Heart left ventricle (tissue), 16 donors: ENCODE measurements at regions of chr4 and their contacts with region 1.

Region 1: DNA sequence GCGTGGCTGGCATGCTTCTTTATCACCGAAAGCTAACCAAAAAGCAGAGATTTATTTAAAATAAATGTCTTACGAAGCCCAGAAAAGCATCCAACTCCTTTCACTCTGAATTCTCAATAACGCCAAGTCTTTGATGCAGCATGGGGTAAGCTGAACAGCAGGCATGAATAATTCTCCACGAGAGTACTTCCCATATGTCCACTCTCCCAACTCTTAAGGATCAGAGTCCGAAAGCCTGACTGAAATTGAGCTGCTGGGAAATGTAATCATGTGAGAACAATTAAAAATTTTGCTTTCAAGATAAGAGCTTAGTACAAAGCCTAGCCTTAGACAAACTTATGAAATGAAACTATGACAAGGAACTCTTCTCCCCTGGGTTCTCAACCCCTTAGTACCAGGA is 7.5 kb upstream of the SLC39A8 start:
- DNase-seq: no peak
- ATAC-seq: no peak
- H3K4me3 ChIP-seq: no peak overlapping the region
- H3K27ac ChIP-seq: no peak overlapping the region
- H3K4me1 ChIP-seq: no peaks in the 10 kb centered on the region
- H3K27me3 ChIP-seq: no peaks in the 10 kb centered on the region
- CTCF ChIP-seq: no peak
- POLR2A ChIP-seq: no peak

Region 2: DNA sequence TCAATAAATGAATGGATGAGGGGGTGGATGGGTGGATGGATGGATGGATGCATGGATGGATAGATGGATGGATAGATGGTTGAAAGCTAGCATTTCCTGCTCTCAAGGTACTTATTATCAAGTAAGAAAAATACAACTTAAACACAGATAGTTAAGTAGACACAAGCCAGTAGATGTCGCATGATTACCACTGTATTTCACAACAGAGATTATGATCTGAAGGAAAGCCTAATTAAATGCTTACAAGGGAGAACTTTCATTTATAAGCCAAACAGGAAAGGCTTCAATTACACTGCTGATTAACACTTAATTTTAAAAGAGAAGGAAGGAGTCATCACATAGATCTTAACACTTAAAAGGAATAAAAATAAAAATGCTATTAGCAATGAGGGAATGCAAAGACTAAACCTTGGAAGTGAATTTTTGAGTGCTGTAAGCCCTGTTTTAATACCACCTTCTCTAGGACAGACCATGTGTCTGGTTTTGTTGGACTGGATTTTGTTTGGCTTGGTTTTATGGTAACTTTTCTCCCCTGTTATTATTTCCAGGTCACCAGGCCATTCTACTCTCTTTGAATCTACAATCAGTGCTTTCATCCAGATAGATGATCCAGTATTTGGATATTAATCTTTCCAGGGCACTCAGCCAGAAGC is 67.9 kb after region 1 on chr4:
- intact Hi-C with region 1: loop called in 1 of 10 experiments (anchors 10 kb)
- DNase-seq: no peak
- ATAC-seq: no peak
- H3K4me3 ChIP-seq: no peak overlapping the region
- H3K27ac ChIP-seq: no peak overlapping the region
- H3K4me1 ChIP-seq: peaks cover 0 to 4% (median 0%) of the 10 kb centered on the region in 12 donors
- H3K27me3 ChIP-seq: no peaks in the 10 kb centered on the region
- CTCF ChIP-seq: peak in 2 of 12 donors; percentile 6 to 14
- POLR2A ChIP-seq: no peak